ENCODE measurements at regions of chr21 and their contacts with region 1.

Region 1: GRCh38 chr21:41777951-41778874 is 11.4 kb upstream of the RIPK4 start:
- DNase-seq: peak; percentile 84
- ATAC-seq: peak; percentile 92
- H3K4me3 ChIP-seq: peak overlapping the region in 1 of 2 experiments; percentile 18; a peak in 1 of 4 replicates
- H3K27ac ChIP-seq: no peak overlapping the region; the same call in 1 of the 2 replicates
- H3K4me1 ChIP-seq: peaks cover 10 to 25% of the 10 kb centered on the region in 2 experiments
- H3K27me3 ChIP-seq: peaks cover 53% of the 10 kb centered on the region
- CTCF ChIP-seq: peak; percentile 76 to 91 (median 86)
- POLR2A ChIP-seq: no peak
- RAD21 ChIP-seq: peak; percentile 84

Region 2: DNA sequence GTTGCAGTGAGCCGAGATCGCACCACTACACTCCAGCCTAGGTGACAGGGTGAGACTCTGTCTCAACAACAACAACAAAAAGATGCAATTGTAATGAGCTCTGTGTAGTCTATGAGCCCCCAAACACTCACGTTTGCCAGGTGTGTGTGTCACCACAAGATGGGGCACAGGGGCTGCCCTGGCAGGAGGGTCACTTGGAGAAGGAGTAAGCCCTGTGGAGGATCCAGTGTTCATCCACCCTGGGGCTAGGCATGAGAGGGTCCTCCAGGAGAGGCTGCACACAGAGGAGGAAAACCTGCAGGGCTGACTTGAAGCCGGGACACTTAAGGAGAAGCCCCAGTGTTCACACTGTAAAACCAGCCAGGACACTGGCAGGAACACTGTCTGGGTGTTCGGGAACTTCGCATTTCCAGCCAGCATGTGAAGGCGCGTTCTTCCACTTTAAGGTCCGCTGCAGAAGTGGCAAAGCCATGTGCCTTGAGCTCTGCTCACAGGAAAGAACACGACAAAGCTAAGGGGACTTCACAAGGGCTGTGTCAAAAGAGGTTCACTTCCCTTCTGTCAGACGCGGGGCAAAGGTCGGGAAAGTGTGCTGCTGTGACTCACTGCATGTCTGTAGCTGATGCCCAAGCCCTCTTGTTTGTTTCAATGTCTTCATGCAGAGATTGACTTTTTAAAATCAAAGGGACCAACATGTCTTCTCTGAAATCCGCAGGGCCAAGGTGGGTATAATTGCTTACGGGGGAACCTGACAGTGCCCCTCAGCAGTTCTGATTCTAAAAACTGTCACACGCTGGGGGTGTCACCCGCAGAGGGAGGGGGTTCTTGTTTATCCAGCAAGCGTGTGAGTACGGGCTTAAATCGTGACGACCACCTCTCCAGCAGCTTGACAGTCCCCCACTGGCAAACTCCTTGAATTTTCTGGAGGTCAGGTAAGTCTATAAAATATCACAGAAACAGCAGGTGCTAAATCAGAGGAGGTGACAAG is 114.1 kb before region 1 on chr21:
- CTCF ChIA-PET with region 1: interaction called, 6 read pairs
- POLR2A ChIA-PET with region 1: no interaction called
- RAD21 ChIA-PET with region 1: interaction called in 1 of 2 experiments, 3 read pairs
- intact Hi-C with region 1: loop called (anchors 5 kb)
- DNase-seq: no peak
- ATAC-seq: peak; percentile 68
- H3K4me3 ChIP-seq: no peak overlapping the region
- H3K27ac ChIP-seq: no peak overlapping the region
- H3K4me1 ChIP-seq: peaks cover 6 to 21% of the 10 kb centered on the region in 2 experiments; a peak in 3 of 4 replicates
- H3K27me3 ChIP-seq: peaks cover 8% of the 10 kb centered on the region; the same call in 1 of the 2 replicates
- CTCF ChIP-seq: peak; percentile 24 to 41 (median 27); a peak in 3 of 6 replicates
- POLR2A ChIP-seq: no peak
- RAD21 ChIP-seq: peak; percentile 64